IMR-90 (cell line): ENCODE measurements at regions of chr5 and their contacts with region 1.

Region 1: GRCh38 chr5:120062515-120063048 is 401.5 kb upstream of the PRR16 start:
- DNase-seq: peak; percentile 61
- ATAC-seq: no peak
- H3K4me3 ChIP-seq: no peak overlapping the region
- H3K27ac ChIP-seq: no peak overlapping the region
- H3K4me1 ChIP-seq: no peaks in the 10 kb centered on the region; the same call in 1 of the 2 replicates
- H3K27me3 ChIP-seq: no peaks in the 10 kb centered on the region
- CTCF ChIP-seq: no peak
- POLR2A ChIP-seq: no peak
- RAD21 ChIP-seq: no peak

Region 2: DNA sequence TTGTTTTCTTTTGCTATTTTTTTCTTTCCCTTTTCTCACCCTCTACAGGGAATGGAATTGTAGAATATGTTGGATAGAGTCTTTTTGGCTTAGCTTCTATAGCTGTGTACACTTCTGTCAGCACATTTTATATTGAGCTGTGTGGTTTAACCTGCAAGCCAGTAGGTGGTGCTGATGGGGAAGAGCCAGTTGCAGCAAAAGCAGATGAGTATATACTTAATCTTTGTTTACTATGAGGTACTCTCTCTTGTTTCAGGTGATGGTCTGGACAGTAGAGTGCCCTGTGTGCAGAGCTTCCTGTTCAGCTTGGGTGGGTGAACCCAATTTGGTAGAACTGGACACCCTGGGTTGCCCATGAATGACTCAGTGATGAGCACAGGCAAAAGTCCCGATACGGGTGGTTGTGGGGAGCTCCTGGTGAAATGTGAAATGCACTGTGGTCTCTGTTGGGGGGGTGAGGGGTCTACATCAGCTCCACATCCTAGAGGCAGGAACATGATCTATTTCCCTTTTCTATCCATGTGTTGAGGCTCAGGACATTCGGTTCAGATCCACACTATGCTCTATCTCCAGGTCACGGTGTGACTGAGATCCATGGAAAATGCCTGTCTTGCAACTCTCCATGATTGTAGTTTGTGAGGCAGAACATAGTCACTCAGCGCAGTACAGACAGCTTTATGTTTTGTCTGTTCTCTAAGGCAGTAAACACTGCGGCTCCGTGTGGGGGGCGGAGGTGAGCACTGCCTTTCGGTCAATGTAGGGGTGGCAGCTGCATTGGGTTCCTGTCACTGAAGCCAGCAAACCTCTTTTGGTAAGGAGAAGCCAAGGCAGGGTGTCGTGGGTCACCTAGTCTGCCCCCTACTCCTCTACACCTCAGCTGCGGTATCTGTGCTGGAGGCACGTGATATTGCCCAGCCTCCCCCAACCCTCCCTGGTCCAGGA is 754.7 kb after region 1 on chr5:
- CTCF ChIA-PET with region 1: no interaction called
- POLR2A ChIA-PET with region 1: no interaction called
- dilution Hi-C with region 1: no loop called
- in situ Hi-C with region 1: loop called (anchors 10 kb)
- intact Hi-C with region 1: no loop called
- DNase-seq: peak; percentile 31
- ATAC-seq: peak; percentile 72
- H3K4me3 ChIP-seq: no peak overlapping the region
- H3K27ac ChIP-seq: no peak overlapping the region
- H3K4me1 ChIP-seq: no peaks in the 10 kb centered on the region
- H3K27me3 ChIP-seq: no peaks in the 10 kb centered on the region
- CTCF ChIP-seq: peak; percentile 49
- POLR2A ChIP-seq: no peak
- RAD21 ChIP-seq: peak; percentile 40; the same call in 1 of the 2 replicates